AG04449 (cell line): ENCODE measurements at regions of chr4 and their contacts with region 1.

Region 1: DNA sequence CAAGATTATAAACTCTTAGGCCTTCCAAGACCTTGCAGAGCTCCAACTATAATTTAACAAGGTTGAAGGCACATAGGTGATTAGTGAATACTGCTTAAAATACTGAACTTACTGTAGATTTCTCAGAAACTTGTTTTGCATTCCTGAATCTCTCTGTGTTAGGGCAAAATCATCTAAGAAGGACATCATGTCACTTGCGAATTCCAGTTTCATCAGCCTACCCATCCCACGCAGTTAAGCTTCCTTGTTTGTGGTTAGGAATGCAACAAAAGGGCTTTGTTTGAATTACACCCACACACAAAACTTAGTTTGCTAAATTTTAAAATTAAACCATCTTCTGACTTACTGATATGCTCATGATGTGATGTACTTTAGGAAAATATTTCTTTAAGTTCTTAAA is 174.0 kb downstream of the SOWAHB start:
- DNase-seq: no peak
- H3K4me3 ChIP-seq: no peak overlapping the region
- CTCF ChIP-seq: no peak

Region 2: GRCh38 chr4:76712564-76712963 is 11.4 kb before region 1 on chr4:
- CTCF ChIA-PET with region 1: interaction called, 18 read pairs
- POLR2A ChIA-PET with region 1: no interaction called
- DNase-seq: no peak
- H3K4me3 ChIP-seq: no peak overlapping the region
- CTCF ChIP-seq: no peak